ENCODE measurements at regions of chr6 and their contacts with region 1.

Region 1: DNA sequence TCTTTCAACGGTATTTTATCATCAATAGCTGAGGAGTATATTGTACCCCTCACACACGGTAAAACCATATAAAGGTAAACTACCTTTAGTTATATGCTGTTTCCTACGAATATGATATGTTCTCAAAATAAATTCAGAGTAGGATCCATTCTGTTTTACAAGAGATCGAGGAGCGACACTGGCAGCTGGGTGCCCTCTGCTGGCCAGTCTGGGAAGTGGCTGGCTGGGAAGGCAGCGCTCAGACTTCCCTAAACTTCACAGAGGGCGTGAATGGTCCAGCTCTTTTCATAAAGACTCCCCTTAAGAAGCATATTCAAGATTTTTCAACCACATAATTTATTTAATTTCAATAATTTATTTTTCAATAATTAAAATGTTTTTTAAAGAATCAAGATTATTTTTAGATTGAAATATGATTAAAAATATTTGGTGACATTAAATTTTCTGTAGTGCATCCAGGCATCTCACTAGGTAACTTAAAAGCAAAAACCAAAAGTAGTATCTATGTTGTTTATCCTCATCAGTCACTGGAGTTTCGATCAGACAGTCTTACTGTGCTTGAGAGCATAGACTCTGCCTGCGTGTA is 187.5 kb upstream of the PDE10A start:
- DNase-seq: peak; percentile 60
- H3K4me3 Mint-ChIP-seq: no peak overlapping the region
- H3K27ac Mint-ChIP-seq: no peak overlapping the region
- H3K4me1 Mint-ChIP-seq: no peaks in the 10 kb centered on the region
- H3K27me3 Mint-ChIP-seq: peaks cover 49% of the 10 kb centered on the region

Region 2: GRCh38 chr6:165439928-165440554 is 410.5 kb before region 1 on chr6:
- CTCF ChIA-PET with region 1: interaction called, 17 read pairs
- POLR2A ChIA-PET with region 1: interaction called, 3 read pairs
- DNase-seq: no peak
- H3K4me3 Mint-ChIP-seq: no peak overlapping the region
- H3K27ac Mint-ChIP-seq: no peak overlapping the region
- H3K4me1 Mint-ChIP-seq: no peaks in the 10 kb centered on the region
- H3K27me3 Mint-ChIP-seq: no peaks in the 10 kb centered on the region

Region 3: GRCh38 chr6:165704045-165704748 is 146.3 kb before region 1 on chr6:
- CTCF ChIA-PET with region 1: no interaction called
- POLR2A ChIA-PET with region 1: no interaction called
- DNase-seq: no peak
- H3K4me3 Mint-ChIP-seq: no peak overlapping the region
- H3K27ac Mint-ChIP-seq: no peak overlapping the region
- H3K4me1 Mint-ChIP-seq: no peaks in the 10 kb centered on the region
- H3K27me3 Mint-ChIP-seq: no peaks in the 10 kb centered on the region

Region 4: DNA sequence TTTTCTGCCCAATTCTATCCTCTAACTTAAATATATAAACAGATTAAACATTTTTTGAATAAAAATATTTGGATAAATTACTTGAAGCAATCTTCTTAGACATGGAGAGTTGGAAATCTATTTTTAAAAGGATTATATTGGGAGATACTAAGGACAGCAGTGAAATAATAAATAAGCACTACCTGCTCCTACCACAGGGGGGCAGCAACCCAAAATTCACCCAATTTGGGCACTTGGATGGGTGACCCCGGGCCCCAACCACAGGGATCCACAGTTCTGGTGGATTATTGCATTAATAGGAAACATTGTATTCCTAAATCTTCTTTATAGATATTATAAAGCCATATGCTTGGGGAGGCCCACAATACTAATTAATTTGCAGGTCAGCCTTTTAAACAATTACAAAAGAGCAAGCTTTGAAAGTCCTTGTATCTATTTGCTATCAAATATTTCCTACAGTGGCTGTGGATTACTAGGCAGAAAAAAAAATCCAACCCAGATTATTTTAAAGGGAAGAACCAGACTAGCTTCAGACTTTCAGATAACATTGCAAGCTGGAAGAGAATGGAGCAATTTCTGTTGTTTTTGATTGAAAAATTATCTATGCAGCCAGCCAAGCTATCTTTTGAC is 121.1 kb before region 1 on chr6:
- CTCF ChIA-PET with region 1: interaction called, 18 read pairs
- POLR2A ChIA-PET with region 1: no interaction called
- DNase-seq: peak; percentile 29
- H3K4me3 Mint-ChIP-seq: no peak overlapping the region
- H3K27ac Mint-ChIP-seq: no peak overlapping the region
- H3K4me1 Mint-ChIP-seq: no peaks in the 10 kb centered on the region
- H3K27me3 Mint-ChIP-seq: no peaks in the 10 kb centered on the region

Measured in activated CD4-positive, alpha-beta memory T cell treated with anti-CD3 and anti-CD28 coated beads, Interleukin-2, amount 10 ng/mL, durations not matched to agents 7 days and 5 days (primary cell).